ENCODE measurements at regions of chr4 and their contacts with region 1.

Region 1: DNA sequence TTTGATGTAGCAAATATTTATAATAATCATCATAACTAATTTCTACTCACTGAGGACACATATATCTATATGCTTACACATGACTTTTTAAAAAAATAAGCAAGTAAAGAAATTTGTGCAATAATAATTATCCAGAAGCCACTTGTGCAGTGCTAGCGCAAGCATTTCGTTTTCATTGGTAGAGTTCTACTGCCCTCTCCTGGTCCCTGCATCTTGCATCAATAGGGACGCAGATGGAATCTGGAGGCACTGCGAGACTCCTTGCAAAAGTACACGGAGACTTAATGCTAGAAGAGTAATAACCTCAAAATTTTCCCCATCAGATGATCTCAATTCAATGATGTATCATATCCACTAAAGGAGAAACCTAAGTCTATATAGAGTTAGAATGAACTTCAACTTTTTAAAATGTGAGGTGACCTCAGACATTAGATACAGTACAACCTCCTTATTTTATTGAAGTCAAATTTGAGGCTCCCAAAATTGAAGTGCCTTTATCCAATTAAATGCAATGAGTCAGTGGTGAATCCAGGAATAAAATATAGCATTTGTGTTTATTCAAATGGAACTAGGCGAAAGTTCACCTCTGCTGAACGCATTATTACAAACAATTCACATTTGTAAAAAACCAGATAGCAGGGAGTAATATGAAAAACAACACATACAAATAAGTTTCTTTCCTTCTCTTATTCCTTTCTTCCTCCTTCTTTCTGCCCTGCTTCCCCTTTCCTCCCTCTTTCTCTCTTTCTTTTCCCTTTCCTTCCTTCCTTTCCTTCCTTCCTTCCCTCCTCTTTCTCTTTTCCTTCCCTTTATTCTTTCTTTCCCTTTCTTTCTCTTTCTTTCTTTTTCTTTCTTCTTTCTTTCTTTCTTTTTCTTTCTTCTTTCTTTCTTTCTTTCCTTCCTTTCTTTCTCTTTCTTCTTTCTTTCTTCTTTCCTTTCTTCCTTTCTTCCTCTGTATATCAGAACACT is 450.0 kb downstream of the ANKRD50 start:
- DNase-seq: peak; percentile 54 to 77 (median 59)
- ATAC-seq: peak; percentile 94
- H3K4me3 ChIP-seq: no peak overlapping the region
- H3K27ac ChIP-seq: no peak overlapping the region
- H3K4me1 ChIP-seq: no peaks in the 10 kb centered on the region
- H3K27me3 ChIP-seq: no peaks in the 10 kb centered on the region
- CTCF ChIP-seq: peak; percentile 65 to 70 (median 70)
- EP300 ChIP-seq: no peak
- POLR2A ChIP-seq: no peak
- RAD21 ChIP-seq: peak; percentile 74 to 81

Region 2: DNA sequence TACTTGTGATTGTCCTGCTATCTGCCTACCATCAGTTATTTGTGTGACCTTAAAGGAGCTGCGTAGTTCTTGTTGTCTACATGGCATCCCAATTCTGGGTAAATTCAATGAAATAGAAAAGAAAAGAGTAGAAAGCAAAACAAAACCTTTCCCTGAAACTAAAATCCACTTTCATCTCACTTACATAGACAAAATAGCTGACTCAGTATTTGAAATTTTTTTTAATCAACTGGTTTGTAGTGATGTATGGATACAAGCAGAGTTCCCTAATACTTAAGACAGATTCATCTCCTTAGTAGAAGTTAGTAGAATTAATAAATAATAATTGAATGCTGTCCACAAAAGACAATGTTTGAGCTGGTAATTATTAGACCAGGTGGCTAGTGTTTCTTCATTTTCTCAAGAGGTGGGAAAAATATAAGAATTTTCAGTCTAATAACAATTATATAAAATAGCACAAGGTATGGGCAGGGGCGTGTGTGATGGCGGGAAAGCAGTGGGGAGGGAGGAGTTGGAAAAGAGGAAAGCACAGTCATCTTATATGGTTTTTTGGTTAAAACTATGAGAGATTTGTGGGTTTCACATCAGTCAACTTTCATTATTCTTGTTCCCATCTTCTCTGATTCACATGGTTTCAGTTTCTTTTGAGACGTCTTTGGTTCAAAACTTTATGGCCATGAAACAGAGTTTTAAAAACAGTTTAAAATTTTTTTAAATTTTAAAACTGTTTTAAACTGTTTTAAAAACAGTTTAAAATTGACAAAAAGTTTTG is 590.7 kb before region 1 on chr4:
- CTCF ChIA-PET with region 1: no interaction called
- POLR2A ChIA-PET with region 1: no interaction called
- in situ Hi-C with region 1: no loop called
- intact Hi-C with region 1: loop called (anchors 10 kb)
- DNase-seq: no peak
- ATAC-seq: no peak
- H3K4me3 ChIP-seq: no peak overlapping the region
- H3K27ac ChIP-seq: no peak overlapping the region
- H3K4me1 ChIP-seq: no peaks in the 10 kb centered on the region
- H3K27me3 ChIP-seq: no peaks in the 10 kb centered on the region
- CTCF ChIP-seq: no peak
- EP300 ChIP-seq: no peak
- POLR2A ChIP-seq: no peak
- RAD21 ChIP-seq: no peak

Region 3: DNA sequence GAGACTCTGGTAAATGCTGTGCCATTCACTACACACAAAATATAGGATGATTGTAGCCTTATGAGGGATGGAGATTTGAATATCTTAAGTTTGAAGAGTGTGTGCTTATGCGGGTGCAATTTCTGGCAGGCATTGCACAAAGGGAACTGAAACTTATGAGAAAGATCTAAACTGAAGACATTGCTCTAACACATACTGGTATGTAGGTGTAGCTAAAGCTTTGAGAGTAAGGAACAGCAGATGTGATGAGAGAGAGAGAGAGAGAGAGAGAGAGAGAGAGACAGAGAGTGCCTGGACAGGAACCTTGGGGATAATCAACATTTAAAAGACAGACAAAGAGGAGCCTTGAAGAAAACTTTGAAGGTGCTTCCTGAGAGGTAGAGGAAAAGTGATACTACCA is 486.2 kb before region 1 on chr4:
- CTCF ChIA-PET with region 1: no interaction called
- POLR2A ChIA-PET with region 1: no interaction called
- in situ Hi-C with region 1: no loop called
- intact Hi-C with region 1: loop called (anchors 2 kb)
- DNase-seq: no peak
- ATAC-seq: no peak
- H3K4me3 ChIP-seq: no peak overlapping the region
- H3K27ac ChIP-seq: no peak overlapping the region
- H3K4me1 ChIP-seq: no peaks in the 10 kb centered on the region
- H3K27me3 ChIP-seq: no peaks in the 10 kb centered on the region
- CTCF ChIP-seq: no peak
- EP300 ChIP-seq: no peak
- POLR2A ChIP-seq: no peak
- RAD21 ChIP-seq: no peak

Measured in K562 (cell line).